Brain microvascular endothelial cell (primary cell): ENCODE measurements at regions of chr3 and their contacts with region 1.

Region 1: GRCh38 chr3:171187706-171188290 is 161.3 kb upstream of the SLC2A2 start:
- DNase-seq: peak; percentile 28
- H3K4me3 ChIP-seq: no peak overlapping the region
- H3K27ac ChIP-seq: no peak overlapping the region
- H3K27me3 ChIP-seq: no peaks in the 10 kb centered on the region
- CTCF ChIP-seq: peak; percentile 82

Region 2: GRCh38 chr3:171566803-171567422 is 379.1 kb after region 1 on chr3:
- in situ Hi-C with region 1: loop called (anchors 25 kb)
- DNase-seq: no peak
- H3K4me3 ChIP-seq: no peak overlapping the region
- H3K27ac ChIP-seq: no peak overlapping the region
- H3K27me3 ChIP-seq: no peaks in the 10 kb centered on the region
- CTCF ChIP-seq: peak; percentile 59